Activated naive CD4-positive, alpha-beta T cell treated with anti-CD3 and anti-CD28 coated beads for 36 hours (primary cell): ENCODE measurements at regions of chr2 and their contacts with region 1.

Region 1: DNA sequence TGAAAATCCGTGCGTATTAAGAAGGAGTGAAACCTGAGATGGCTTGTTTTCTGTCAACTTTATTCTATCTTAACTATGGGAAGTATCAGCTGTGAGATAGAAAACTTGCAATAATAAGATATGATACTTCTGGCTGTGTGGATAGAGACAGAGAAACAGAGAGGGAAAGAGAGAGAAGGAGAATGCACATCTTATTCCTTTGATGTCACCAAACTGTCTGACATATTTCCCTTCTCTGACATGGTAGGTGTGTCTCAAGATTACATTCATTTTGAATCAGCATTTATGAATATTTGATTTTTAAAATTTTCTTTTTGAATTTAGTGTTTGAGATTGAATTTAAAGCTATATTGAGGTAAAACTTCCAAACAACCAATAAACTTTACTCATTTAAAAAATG is 69.4 kb downstream of the CDC42EP3 start:
- DNase-seq: no peak
- H3K4me3 Mint-ChIP-seq: no peak overlapping the region
- H3K27ac Mint-ChIP-seq: no peak overlapping the region
- H3K4me1 Mint-ChIP-seq: peaks cover 27% of the 10 kb centered on the region
- H3K27me3 Mint-ChIP-seq: no peaks in the 10 kb centered on the region

Region 2: GRCh38 chr2:37615804-37616676 is 14.0 kb after region 1 on chr2:
- CTCF ChIA-PET with region 1: no interaction called
- intact Hi-C with region 1: loop called (anchors 2 kb)
- DNase-seq: peak; percentile 57
- H3K4me3 Mint-ChIP-seq: no peak overlapping the region
- H3K27ac Mint-ChIP-seq: no peak overlapping the region
- H3K4me1 Mint-ChIP-seq: peaks cover 36% of the 10 kb centered on the region
- H3K27me3 Mint-ChIP-seq: no peaks in the 10 kb centered on the region